ENCODE measurements at regions of chr2 and their contacts with region 1.

Region 1: DNA sequence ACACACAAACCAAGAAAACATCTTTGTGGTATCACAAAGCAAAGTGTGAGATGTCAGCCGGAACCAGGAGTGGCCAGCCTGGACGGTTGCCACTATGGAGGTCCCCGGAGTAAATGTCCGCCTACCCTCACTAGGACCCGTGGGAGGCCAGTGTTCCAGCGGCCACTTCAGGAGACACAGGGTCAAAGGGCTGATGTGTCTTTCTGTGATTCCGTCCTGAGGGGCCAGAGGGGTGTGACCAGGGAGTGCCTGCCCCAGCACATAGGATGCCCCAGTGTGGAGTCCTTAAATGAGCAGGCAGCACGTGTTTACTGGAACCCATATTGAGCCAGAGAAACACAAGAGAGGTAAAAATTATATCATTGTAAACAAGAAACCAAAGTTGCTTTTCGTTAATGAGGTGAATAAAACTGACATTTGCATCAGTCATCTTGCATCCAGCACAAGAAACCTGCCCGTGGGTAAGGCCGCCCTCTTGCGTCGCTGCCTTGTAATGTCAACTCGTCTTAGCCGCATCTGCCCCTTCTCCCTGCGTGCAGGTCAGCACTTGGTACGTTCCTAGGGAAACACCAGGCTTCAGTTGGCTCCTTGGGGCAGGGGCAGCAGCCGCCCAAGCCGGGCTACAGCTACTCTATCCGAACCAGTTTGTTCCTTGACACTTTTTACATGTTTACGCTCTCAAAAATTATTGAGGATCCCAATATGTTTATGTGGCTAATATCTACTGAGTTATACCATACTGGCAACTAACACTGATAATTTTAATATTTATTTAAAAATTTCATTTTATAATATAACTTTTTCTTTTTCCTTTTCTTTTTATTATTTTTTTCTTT is 46.7 kb upstream of the LAPTM4A start:
- DNase-seq: peak; percentile 94
- H3K4me3 ChIP-seq: no peak overlapping the region
- H3K27ac ChIP-seq: no peak overlapping the region
- H3K4me1 ChIP-seq: peaks cover 0 to 8% (median 5%) of the 10 kb centered on the region in 6 donors
- H3K27me3 ChIP-seq: peaks cover 0 to 19% (median 0%) of the 10 kb centered on the region in 7 donors
- CTCF ChIP-seq: peak; percentile 59 to 83 (median 81)
- POLR2A ChIP-seq: no peak

Region 2: GRCh38 chr2:19754907-19755306 is 343.2 kb before region 1 on chr2:
- intact Hi-C with region 1: no loop called
- DNase-seq: no peak
- H3K4me3 ChIP-seq: no peak overlapping the region
- H3K27ac ChIP-seq: no peak overlapping the region
- H3K4me1 ChIP-seq: no peaks in the 10 kb centered on the region
- H3K27me3 ChIP-seq: peaks cover 0 to 16% (median 0%) of the 10 kb centered on the region in 7 donors
- CTCF ChIP-seq: no peak
- POLR2A ChIP-seq: no peak

Region 3: GRCh38 chr2:19937004-19937403 is 161.1 kb before region 1 on chr2:
- intact Hi-C with region 1: no loop called
- DNase-seq: no peak
- H3K4me3 ChIP-seq: no peak overlapping the region
- H3K27ac ChIP-seq: no peak overlapping the region
- H3K4me1 ChIP-seq: no peaks in the 10 kb centered on the region
- H3K27me3 ChIP-seq: no peaks in the 10 kb centered on the region
- CTCF ChIP-seq: no peak
- POLR2A ChIP-seq: no peak

Region 4: GRCh38 chr2:19955544-19956422 is 142.3 kb before region 1 on chr2:
- intact Hi-C with region 1: loop called (anchors 5 kb)
- DNase-seq: peak; percentile 67
- H3K4me3 ChIP-seq: no peak overlapping the region
- H3K27ac ChIP-seq: no peak overlapping the region
- H3K4me1 ChIP-seq: peaks cover 0 to 4% (median 0%) of the 10 kb centered on the region in 6 donors
- H3K27me3 ChIP-seq: no peaks in the 10 kb centered on the region
- CTCF ChIP-seq: peak in 9 of 11 experiments; percentile 27 to 71 (median 59)
- POLR2A ChIP-seq: no peak

Region 5: GRCh38 chr2:20015472-20016083 is 82.5 kb before region 1 on chr2:
- intact Hi-C with region 1: loop called (anchors 2 kb)
- DNase-seq: no peak
- H3K4me3 ChIP-seq: no peak overlapping the region
- H3K27ac ChIP-seq: no peak overlapping the region
- H3K4me1 ChIP-seq: peaks cover 8 to 19% (median 17%) of the 10 kb centered on the region in 6 donors
- H3K27me3 ChIP-seq: peaks cover 0 to 35% (median 18%) of the 10 kb centered on the region in 7 donors
- CTCF ChIP-seq: peak in 9 of 11 experiments; percentile 34 to 62 (median 47)
- POLR2A ChIP-seq: no peak